Mammary epithelial cell (primary cell): ENCODE measurements at regions of chrX and their contacts with region 1.

Region 1: DNA sequence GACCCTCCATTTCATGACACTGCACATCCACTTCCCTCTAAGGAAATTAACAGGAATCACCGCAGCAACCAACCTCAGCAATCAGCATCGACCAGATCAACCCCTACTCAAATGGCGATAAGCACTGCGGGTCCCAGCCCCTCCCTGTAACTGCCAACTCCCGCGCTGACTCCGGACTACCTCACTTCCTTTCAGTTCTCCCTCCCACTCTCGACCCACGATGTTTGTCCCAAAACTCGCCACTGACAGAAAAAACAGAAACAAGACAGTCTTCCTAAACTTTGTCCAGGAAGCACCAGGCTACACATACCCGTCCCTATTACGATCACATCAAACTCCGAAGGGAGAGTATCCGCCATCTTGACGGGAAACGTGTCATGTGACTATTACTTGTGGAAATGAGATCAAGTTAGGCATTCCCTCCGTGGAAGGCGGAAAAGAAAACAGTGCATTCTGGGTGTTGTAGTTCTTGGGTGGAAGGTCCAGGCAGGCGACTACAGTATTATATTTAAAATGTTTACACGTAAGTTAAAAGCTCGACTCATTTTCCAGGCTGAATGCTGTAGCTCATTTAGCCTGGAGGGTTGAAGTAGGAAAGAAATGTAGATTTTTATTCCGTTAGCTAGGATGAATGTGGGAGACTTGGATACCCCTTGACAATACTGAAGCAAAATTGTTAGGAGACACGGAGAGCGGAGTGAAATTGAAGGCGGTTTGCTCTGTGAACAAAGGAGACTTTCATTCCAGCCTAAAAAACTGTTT is at the start of gene CHM:
- DNase-seq: peak; percentile 78
- H3K4me3 ChIP-seq: peak within 1 kb of the TSS; percentile 56 to 75 (median 56)
- H3K27ac ChIP-seq: peak within 1 kb of the TSS; percentile 76
- H3K4me1 ChIP-seq: no peaks in the 10 kb centered on the region
- H3K27me3 ChIP-seq: no peaks in the 10 kb centered on the region
- CTCF ChIP-seq: no peak
- total RNA-seq, gene CHM: 21.8 to 29.6 TPM

Region 2: GRCh38 chrX:86002076-86002896 is 45.1 kb before region 1 on chrX:
- CTCF ChIA-PET with region 1: no interaction called
- dilution Hi-C with region 1: no loop called
- in situ Hi-C with region 1: no loop called
- intact Hi-C with region 1: loop called (anchors 1 kb)
- DNase-seq: peak; percentile 62
- H3K4me3 ChIP-seq: no peak overlapping the region
- H3K27ac ChIP-seq: no peak overlapping the region
- H3K4me1 ChIP-seq: no peaks in the 10 kb centered on the region
- H3K27me3 ChIP-seq: no peaks in the 10 kb centered on the region
- CTCF ChIP-seq: no peak

Region 3: DNA sequence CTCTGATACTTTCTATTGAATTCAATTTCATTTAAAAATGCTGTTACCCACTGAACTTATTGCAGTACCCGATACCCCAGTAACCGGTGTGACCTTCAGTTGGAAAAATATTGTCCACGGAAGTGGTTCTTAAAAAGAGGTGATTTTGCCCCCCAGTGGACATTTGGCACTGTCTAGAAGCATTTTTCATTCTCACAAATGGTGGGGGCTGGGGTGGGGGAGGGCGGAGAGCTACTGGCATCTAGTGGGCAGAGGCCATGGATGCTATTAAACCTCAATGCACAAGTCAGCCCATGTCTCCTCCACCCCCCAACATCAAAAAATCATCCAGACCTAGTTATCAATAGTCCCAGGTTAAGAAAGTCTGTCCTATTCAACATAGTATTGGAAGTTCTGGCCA is 19.6 kb after region 1 on chrX:
- CTCF ChIA-PET with region 1: no interaction called
- dilution Hi-C with region 1: no loop called
- in situ Hi-C with region 1: no loop called
- intact Hi-C with region 1: no loop called
- DNase-seq: no peak
- H3K4me3 ChIP-seq: no peak overlapping the region
- H3K27ac ChIP-seq: no peak overlapping the region
- H3K4me1 ChIP-seq: no peaks in the 10 kb centered on the region
- H3K27me3 ChIP-seq: no peaks in the 10 kb centered on the region
- CTCF ChIP-seq: no peak

Region 4: GRCh38 chrX:86148024-86148511 is 100.7 kb after region 1 on chrX and contains the start of gene DACH2:
- CTCF ChIA-PET with region 1: no interaction called
- dilution Hi-C with region 1: no loop called
- in situ Hi-C with region 1: no loop called
- intact Hi-C with region 1: loop called (anchors 10 kb)
- DNase-seq: peak; percentile 75
- H3K4me3 ChIP-seq: peak within 1 kb of the TSS; percentile 40 to 61 (median 52)
- H3K27ac ChIP-seq: no peak within 1 kb of the TSS
- H3K4me1 ChIP-seq: no peaks in the 10 kb centered on the region
- H3K27me3 ChIP-seq: peaks cover 4% of the 10 kb centered on the region
- CTCF ChIP-seq: no peak
- total RNA-seq, gene DACH2: 0.28 TPM in 1 of 2 donors, not detected in the other